ENCODE measurements at regions of chr22 and their contacts with region 1.

Region 1: DNA sequence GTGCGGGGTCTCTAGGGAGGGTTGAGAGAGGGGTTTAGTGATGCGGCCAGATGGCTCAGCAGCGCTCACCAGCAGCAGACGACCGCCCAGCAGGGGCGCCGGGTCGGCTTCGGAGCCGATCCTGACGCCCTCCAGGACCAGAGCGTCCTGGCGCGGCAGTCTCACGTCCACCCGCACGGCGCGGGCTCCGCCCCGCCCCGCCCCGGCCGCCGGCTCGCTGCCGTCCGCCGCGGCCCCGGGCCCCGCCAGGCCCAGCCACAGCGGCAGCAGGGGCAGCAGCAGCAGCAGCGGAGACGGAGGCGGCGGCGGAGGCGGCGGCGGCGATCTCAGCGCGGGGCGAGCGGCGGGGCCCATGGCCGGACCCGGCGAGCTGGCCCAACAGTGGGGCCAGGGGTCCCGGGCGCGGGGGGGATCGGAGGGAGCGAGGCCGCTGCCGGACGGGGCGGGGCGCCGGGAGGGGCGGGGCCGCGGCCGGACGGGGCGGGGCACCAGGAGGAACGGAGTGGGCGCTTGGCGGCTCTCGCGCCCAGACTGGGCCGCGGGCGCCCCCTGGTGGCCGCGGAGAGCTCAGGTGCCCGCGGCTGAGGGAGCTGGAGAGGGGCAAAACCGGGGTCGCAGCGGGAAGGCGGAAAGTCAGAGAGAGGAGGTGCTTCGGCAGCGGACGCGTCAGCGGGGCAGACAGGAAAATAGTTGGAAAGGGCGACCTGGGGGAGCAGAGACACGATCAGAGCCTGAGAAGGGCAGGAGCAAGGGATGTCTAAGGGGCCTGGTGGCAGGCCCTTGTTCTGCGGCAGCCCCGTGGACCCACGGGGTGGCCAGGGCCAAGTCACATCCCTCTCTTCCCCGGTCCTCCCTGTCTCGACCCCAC is at the start of gene RNF215:
- DNase-seq: peak; percentile 96
- H3K4me3 ChIP-seq: peak within 1 kb of the TSS; percentile 24 to 81 (median 44)
- H3K27ac ChIP-seq: peak within 1 kb of the TSS in 7 of 8 donors; percentile 44 to 92 (median 73)
- H3K4me1 ChIP-seq: peaks cover 6 to 33% (median 16%) of the 10 kb centered on the region in 6 donors
- H3K27me3 ChIP-seq: no peaks in the 10 kb centered on the region
- CTCF ChIP-seq: peak; percentile 90 to 97 (median 95)
- POLR2A ChIP-seq: no peak
- total RNA-seq, gene RNF215: 10.2 to 19.5 (median 15.9) TPM

Region 2: DNA sequence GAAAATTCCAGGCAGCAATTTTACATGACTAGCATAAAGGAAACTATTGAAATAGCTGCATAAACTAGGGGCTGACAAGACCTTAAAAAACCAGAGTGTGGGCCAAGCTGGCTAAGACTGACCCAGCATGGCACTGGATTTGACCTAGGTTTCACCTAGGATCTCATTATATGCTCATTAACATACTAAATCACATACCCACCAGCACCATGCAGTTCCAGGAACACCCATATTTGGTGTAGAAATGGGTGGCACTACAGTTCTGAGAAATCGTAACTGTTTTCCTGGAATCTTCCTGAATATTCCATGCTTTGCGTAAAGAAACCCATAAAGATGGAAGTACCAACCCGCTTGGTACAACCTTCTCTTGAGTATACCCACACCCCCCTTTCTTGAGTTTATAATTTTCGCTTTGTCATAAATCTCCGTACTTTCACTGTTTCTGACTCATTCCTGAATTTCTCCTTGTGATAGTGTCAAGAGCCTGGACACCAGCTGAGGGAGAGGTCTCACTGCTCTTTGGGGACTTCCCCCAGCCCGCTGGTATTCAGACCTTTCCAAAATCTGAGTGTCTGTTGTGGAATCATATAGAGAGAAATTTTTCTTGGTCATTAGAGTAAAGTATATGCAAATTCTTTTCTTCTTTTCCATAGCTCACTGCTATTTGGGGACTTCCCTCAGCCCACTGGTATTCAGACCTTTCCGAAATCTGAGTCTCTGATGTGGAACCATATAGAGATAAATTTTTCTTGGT is 449.1 kb before region 1 on chr22:
- intact Hi-C with region 1: no loop called
- DNase-seq: no peak
- H3K4me3 ChIP-seq: no peak overlapping the region
- H3K27ac ChIP-seq: no peak overlapping the region
- H3K4me1 ChIP-seq: peaks cover 7 to 62% (median 44%) of the 10 kb centered on the region in 6 donors
- H3K27me3 ChIP-seq: no peaks in the 10 kb centered on the region
- CTCF ChIP-seq: no peak
- POLR2A ChIP-seq: no peak

Region 3: GRCh38 chr22:30116362-30117117 is 270.7 kb before region 1 on chr22:
- intact Hi-C with region 1: loop called (anchors 10 kb)
- DNase-seq: no peak
- H3K4me3 ChIP-seq: no peak overlapping the region
- H3K27ac ChIP-seq: no peak overlapping the region
- H3K4me1 ChIP-seq: no peaks in the 10 kb centered on the region
- H3K27me3 ChIP-seq: no peaks in the 10 kb centered on the region
- CTCF ChIP-seq: no peak
- POLR2A ChIP-seq: no peak

Region 4: GRCh38 chr22:30262917-30263741 is 124.1 kb before region 1 on chr22:
- intact Hi-C with region 1: loop called (anchors 5 kb)
- DNase-seq: peak; percentile 92
- H3K4me3 ChIP-seq: peak overlapping the region in 5 of 8 donors; percentile 4 to 59 (median 5)
- H3K27ac ChIP-seq: peak overlapping the region in 7 of 8 donors; percentile 7 to 98 (median 73)
- H3K4me1 ChIP-seq: peaks cover 9 to 88% (median 46%) of the 10 kb centered on the region in 6 donors
- H3K27me3 ChIP-seq: no peaks in the 10 kb centered on the region
- CTCF ChIP-seq: peak; percentile 83 to 99 (median 94)
- POLR2A ChIP-seq: no peak

Region 5: GRCh38 chr22:30289134-30289979 is 97.8 kb before region 1 on chr22 and contains the start of gene CASTOR1:
- intact Hi-C with region 1: loop called (anchors 5 kb)
- DNase-seq: peak; percentile 98
- H3K4me3 ChIP-seq: peak within 1 kb of the TSS; percentile 70 to 91 (median 86)
- H3K27ac ChIP-seq: peak within 1 kb of the TSS; percentile 83 to 95 (median 90)
- H3K4me1 ChIP-seq: peaks cover 29 to 69% (median 60%) of the 10 kb centered on the region in 6 donors
- H3K27me3 ChIP-seq: no peaks in the 10 kb centered on the region
- CTCF ChIP-seq: peak in 4 of 11 experiments; percentile 10 to 40 (median 24)
- POLR2A ChIP-seq: peak in 1 of 3 donors; percentile 16
- total RNA-seq, gene CASTOR1: 7.4 to 18.9 (median 14.6) TPM

Region 6: GRCh38 chr22:30485362-30485988 is 98.3 kb after region 1 on chr22:
- intact Hi-C with region 1: loop called (anchors 2 kb)
- DNase-seq: peak; percentile 86
- H3K4me3 ChIP-seq: no peak overlapping the region
- H3K27ac ChIP-seq: no peak overlapping the region
- H3K4me1 ChIP-seq: peaks cover 0 to 6% (median 1%) of the 10 kb centered on the region in 6 donors
- H3K27me3 ChIP-seq: peaks cover 0 to 7% (median 0%) of the 10 kb centered on the region in 7 donors
- CTCF ChIP-seq: peak; percentile 87 to 98 (median 97)
- POLR2A ChIP-seq: no peak